ENCODE measurements at regions of chr2 and their contacts with region 1.

Region 1: DNA sequence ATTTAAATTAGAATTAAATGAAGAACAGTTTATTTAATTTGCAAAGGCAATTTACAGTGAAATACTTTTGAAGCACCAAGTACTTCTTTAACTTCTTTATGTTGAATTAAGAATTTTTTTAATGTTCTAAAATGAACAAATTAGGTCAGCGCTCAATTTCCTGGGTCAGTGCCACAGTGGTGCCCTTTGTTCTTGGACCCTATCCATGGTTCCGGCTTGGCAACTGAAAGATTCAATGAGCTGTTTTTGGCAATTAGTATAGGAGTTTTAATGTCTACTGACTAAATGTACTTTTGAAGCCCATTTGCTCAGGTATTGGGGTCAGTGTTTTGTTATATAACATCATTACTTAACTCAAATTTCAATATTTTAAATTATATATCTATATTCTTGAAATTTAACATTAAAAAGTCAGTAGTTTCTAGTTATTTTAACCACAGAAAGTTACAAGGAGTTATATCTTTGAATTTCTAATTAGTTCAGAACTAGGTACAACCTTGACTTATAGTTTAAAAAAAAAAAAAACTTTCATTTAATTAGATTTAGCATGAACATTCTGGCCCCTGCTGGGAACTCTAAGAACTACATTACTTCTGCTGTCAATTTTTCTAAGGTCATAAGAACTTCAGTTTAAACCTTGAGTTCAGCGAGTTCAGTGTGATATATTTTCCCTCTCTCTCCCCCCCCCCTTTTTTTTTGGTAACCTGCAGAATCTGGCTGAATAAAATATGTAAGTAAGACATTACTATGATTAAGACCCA is 7.6 kb upstream of the MSTN start:
- DNase-seq: no peak
- ATAC-seq: peak; percentile 70
- H3K4me3 ChIP-seq: no peak overlapping the region
- H3K27ac ChIP-seq: no peak overlapping the region
- H3K4me1 ChIP-seq: no peaks in the 10 kb centered on the region
- H3K27me3 ChIP-seq: no peaks in the 10 kb centered on the region
- CTCF ChIP-seq: peak; percentile 53 to 74 (median 55)
- EP300 ChIP-seq: no peak
- POLR2A ChIP-seq: no peak
- RAD21 ChIP-seq: peak; percentile 93

Region 2: DNA sequence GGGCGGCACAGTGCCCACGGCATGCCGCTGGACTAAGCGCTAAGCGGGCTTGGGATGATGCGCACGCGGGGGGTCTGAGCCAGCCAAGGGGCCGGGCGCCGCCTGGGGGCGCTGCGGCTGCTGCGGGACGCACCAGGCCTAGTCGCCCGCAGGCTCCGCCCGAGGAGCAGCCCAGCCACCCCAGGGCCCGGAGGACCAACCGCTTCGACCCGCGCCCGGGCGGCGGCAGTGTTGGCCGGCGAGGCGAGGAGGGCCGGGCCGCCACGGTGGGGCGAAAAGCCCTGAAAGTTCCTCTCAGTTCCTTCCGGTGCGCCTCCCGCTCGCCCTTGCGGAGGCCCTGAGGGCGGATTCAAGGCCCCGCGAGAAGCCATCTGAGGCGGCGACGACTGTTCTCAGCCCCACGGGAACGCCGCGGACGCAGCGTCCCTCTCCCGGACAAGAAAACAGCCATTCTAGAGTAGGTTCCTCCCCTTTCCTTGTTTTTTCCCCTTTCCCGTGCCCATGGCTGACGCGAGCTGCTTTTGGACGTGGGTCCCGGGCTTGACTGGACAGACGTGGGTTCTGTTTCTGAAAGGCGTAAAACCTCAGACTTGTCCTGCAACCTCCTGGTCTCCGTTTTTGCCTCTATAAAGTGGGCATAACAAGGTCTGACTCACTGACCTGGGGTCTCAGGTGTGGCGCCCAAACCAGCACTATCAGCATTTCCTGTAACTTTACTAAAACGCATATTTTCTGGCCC is 395.6 kb before region 1 on chr2 and contains the start of gene ANKAR:
- CTCF ChIA-PET with region 1: interaction called, 4 read pairs
- POLR2A ChIA-PET with region 1: no interaction called
- RAD21 ChIA-PET with region 1: no interaction called
- SMC1A ChIA-PET with region 1: interaction called, 4 read pairs
- in situ Hi-C with region 1: loop called (anchors 5 kb)
- intact Hi-C with region 1: no loop called
- DNase-seq: peak; percentile 36
- ATAC-seq: peak; percentile 98
- H3K4me3 ChIP-seq: peak within 1 kb of the TSS; percentile 76
- H3K27ac ChIP-seq: peak within 1 kb of the TSS; percentile 93
- H3K4me1 ChIP-seq: peaks cover 3% of the 10 kb centered on the region; the same call in 1 of the 2 replicates
- H3K27me3 ChIP-seq: no peaks in the 10 kb centered on the region
- CTCF ChIP-seq: peak; percentile 76 to 80 (median 76); a peak in 5 of 6 replicates
- EP300 ChIP-seq: no peak
- POLR2A ChIP-seq: peak; percentile 84
- RAD21 ChIP-seq: peak; percentile 40; the same call in 1 of the 2 replicates
- polyA plus RNA-seq, gene ANKAR: 1.3 to 2.9 TPM

Region 3: DNA sequence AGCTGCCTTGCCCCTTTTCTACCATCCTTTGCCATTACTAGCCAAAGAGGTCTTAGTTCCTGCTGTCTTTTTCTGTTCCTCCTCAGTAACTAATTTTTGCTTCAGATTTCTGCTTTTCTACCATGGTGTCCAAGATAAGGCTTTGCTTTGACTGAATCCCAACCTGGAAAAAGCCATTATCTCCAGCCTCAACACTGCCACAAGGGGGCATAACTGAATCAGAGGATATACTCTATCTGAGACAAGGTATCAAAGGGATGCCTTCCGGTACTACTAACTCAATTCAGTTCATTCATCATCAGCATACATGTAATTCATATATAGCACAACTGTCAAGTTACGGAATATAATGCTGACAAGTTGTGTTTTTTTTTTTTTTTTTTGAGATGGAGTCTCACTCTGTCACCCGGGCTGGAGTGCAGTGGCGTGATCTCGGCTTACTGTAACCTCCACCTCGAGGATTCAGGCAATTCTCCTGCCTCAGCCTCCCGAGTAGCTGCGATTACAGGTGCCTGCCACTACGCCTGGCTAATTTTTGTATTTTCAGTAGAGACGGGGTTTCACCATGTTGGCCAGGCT is 318.9 kb before region 1 on chr2:
- CTCF ChIA-PET with region 1: interaction called, 8 read pairs
- POLR2A ChIA-PET with region 1: no interaction called
- RAD21 ChIA-PET with region 1: interaction called, 5 read pairs
- SMC1A ChIA-PET with region 1: interaction called, 4 read pairs
- in situ Hi-C with region 1: no loop called
- intact Hi-C with region 1: loop called (anchors 2 kb)
- DNase-seq: no peak
- ATAC-seq: peak; percentile 87
- H3K4me3 ChIP-seq: no peak overlapping the region
- H3K27ac ChIP-seq: no peak overlapping the region
- H3K4me1 ChIP-seq: no peaks in the 10 kb centered on the region
- H3K27me3 ChIP-seq: no peaks in the 10 kb centered on the region
- CTCF ChIP-seq: peak; percentile 62 to 74 (median 74); a peak in 5 of 6 replicates
- EP300 ChIP-seq: no peak
- POLR2A ChIP-seq: no peak
- RAD21 ChIP-seq: peak; percentile 63

Region 4: DNA sequence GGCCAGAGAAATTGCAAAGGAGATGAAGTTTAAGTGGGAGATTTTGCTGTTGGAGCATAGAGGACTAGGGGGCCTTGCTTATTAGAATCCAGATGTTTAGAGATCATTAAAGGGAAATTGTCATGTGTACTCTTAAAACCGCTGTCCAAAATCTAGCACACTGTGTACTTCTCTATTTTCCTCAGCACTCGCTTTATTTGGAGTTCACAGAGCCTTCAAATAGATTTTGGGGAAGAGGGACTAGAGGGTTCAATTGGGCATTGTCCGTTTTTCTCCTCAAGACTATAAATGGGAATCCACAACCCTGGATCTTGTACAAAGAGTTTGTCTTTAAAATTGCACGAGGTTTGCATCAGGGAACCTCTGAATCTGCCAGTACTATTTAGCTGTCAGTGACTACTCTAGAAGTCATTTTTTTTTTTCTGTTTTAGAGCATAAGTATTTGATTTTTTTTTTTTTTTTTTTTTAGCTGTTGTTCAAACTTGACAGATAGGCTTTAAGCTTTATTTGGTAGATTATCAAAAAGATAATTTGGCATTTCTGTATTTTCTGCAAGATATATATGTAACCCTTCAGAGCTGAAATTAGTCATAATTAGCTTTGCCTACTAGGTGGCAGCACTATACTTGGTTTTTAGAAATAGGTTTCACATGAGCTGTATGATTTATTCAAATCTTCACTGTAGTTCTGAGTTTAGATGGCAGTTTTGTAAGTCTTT is 271.6 kb before region 1 on chr2:
- CTCF ChIA-PET with region 1: interaction called, 36 read pairs
- POLR2A ChIA-PET with region 1: no interaction called
- RAD21 ChIA-PET with region 1: interaction called, 26 read pairs
- SMC1A ChIA-PET with region 1: interaction called, 11 read pairs
- in situ Hi-C with region 1: loop called (anchors 5 kb)
- intact Hi-C with region 1: loop called (anchors 1 kb)
- DNase-seq: peak; percentile 25
- ATAC-seq: peak; percentile 96
- H3K4me3 ChIP-seq: no peak overlapping the region
- H3K27ac ChIP-seq: no peak overlapping the region
- H3K4me1 ChIP-seq: no peaks in the 10 kb centered on the region
- H3K27me3 ChIP-seq: no peaks in the 10 kb centered on the region
- CTCF ChIP-seq: peak; percentile 34 to 60 (median 48); a peak in 5 of 6 replicates
- EP300 ChIP-seq: no peak
- POLR2A ChIP-seq: no peak
- RAD21 ChIP-seq: peak; percentile 77

Region 5: GRCh38 chr2:190121971-190122370 is 51.9 kb after region 1 on chr2:
- CTCF ChIA-PET with region 1: no interaction called
- POLR2A ChIA-PET with region 1: no interaction called
- RAD21 ChIA-PET with region 1: no interaction called
- SMC1A ChIA-PET with region 1: no interaction called
- in situ Hi-C with region 1: no loop called
- intact Hi-C with region 1: no loop called
- DNase-seq: peak; percentile 9
- ATAC-seq: peak; percentile 88
- H3K4me3 ChIP-seq: no peak overlapping the region
- H3K27ac ChIP-seq: no peak overlapping the region
- H3K4me1 ChIP-seq: no peaks in the 10 kb centered on the region
- H3K27me3 ChIP-seq: no peaks in the 10 kb centered on the region
- CTCF ChIP-seq: peak; percentile 33 to 56 (median 37); a peak in 5 of 6 replicates
- EP300 ChIP-seq: no peak
- POLR2A ChIP-seq: no peak
- RAD21 ChIP-seq: peak; percentile 46

Region 6: DNA sequence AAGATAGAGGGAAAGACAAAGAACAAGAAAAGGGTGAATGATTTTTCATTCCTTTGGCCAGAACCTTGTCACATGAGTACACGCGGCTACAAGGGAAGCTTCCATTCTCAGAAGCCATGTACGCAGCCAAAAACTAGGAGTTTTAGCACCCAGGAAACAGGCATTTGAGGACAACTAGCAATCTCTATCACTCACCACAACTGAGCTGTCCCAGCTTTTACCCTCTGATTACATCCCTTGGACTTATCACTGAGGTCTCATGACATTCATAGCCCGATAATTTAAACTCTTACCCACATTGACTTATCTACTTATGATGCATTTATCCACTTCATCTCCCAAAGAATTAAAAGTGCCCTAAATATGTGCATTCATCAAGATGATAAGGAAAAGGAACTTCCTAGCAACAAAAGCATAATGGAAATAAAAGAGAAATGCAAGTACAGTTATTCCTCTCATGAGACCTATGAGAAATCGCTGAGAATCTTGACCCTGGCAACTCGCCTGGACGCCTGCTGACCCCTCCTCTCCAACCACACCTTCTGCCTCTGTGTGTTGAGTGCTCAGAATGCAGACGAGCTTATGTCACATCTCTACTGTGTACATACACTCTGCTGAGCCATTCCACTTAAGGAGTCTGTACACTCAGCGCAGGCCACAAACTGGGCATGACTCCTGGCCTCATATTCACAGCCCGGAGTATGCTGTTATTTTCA is 309.3 kb after region 1 on chr2:
- CTCF ChIA-PET with region 1: no interaction called
- POLR2A ChIA-PET with region 1: no interaction called
- RAD21 ChIA-PET with region 1: no interaction called
- SMC1A ChIA-PET with region 1: no interaction called
- in situ Hi-C with region 1: no loop called
- intact Hi-C with region 1: no loop called
- DNase-seq: no peak
- ATAC-seq: no peak
- H3K4me3 ChIP-seq: no peak overlapping the region
- H3K27ac ChIP-seq: no peak overlapping the region
- H3K4me1 ChIP-seq: no peaks in the 10 kb centered on the region
- H3K27me3 ChIP-seq: no peaks in the 10 kb centered on the region
- CTCF ChIP-seq: no peak
- EP300 ChIP-seq: no peak
- POLR2A ChIP-seq: no peak
- RAD21 ChIP-seq: no peak